ENCODE measurements at regions of chr2 and their contacts with region 1.

Region 1: DNA sequence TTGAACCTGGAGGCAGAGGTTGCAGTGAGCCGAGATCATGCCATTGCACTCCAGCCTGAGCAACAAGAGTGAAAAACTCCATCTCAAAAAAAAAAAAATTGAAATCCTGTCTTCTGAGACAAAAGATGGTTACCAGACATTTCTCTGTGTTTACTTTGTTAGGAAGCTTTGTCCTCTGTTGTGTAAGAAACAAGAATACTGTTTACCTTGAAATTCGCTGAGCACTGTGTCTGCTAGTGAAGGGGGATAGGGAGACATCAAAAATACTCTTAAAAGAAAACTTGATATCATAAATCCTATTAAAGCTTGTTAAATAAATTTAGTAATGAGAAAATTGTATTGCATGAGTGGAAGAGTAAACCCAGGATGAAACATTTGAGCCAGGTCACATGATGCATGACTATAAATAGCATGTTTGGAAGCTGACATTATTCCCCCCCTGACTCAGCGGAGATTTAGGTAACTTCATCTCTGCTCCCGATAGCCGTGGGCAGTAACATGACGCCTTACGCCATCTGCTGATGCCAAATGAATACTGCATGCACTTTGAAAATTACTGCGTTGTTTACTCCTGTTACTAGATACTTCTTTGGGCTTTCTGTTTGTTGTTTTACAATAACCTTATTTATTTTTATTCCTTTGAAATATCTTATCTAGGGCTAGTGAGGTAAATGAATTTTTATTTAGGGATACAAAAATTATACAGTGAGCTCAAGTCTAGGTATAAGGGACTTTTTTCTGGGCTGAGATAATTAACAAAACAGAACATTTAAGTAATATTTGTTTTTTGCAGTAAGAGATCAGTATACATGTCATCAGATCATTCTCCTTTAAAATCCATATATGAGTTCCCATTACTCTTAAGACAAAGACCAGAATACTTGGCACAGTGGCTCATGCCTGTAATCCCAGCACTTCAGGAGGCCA is 134.9 kb downstream of the MAP3K20 start:
- DNase-seq: peak; percentile 39 to 72
- ATAC-seq: peak; percentile 83 to 91 (median 88)
- H3K4me3 ChIP-seq: peak overlapping the region; percentile 37
- H3K27ac ChIP-seq: peak overlapping the region; percentile 86
- H3K4me1 ChIP-seq: peaks cover 64% of the 10 kb centered on the region
- H3K27me3 ChIP-seq: no peaks in the 10 kb centered on the region
- CTCF ChIP-seq: peak; percentile 85

Region 2: DNA sequence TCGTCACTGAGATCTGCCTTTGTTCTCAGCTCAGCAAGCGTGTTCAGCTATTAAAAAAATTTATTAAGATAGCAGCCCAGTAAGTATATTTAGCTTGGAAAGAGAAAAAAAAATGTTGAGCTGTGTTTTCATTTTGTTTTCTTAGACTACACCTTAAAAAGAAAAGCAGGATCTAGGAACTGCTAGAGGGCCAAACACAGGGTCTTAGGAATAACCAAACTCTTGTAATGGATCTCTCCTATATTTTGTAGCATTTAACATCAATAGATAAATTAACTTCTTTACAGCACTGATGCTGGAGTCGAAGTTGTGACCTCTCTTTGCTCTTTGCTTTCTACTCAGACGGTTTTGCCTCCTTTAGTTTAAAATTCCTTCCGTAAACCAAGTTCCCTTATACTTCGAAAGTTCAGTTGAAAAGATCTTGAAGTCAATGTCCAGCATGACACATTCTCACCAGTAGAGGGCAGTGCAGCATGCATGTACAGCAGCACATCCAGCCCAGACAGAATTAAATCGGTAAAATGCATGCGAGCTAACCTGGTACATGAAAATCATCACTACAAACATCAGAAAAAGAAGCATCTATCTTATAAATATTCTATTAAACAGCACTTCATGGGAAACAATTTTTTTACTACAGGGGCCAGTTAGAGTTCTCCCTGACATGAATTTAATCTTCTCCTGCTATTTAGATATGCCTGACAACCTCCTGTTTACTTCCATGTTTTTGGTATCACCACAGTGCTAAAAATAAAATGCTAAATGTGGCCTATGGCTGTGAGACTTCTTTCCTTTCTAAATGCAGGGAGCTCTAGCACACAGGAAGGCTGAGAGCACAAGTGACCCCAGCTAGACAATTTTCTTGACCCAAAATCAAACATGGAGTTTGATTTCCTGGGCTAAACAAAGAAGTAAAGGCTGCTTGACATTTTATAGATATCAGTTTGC is 183.1 kb before region 1 on chr2:
- intact Hi-C with region 1: loop called (anchors 2 kb)
- DNase-seq: peak; percentile 65 to 81
- ATAC-seq: peak; percentile 66 to 76 (median 71)
- H3K4me3 ChIP-seq: peak overlapping the region; percentile 27
- H3K27ac ChIP-seq: peak overlapping the region; percentile 92
- H3K4me1 ChIP-seq: peaks cover 50% of the 10 kb centered on the region
- H3K27me3 ChIP-seq: no peaks in the 10 kb centered on the region
- CTCF ChIP-seq: peak; percentile 97

Region 3: DNA sequence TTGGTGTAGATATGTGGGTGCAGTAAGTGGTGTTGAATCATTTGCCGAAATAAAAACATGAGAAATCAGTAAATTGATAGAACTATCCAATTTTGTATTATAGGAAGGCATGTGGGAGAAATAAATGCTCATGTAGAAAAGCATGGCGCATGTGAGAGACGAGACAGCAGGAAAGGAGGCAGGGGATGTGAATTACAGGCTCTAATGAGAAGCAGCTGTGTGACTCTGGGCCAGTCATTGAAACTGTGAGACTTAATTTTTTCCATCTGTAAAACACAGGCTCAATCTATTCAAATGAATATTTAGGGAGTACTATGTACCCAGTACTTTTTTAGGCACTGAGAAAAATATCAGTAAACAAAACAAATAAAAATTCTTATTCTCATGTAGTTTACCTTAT is 177.4 kb before region 1 on chr2:
- intact Hi-C with region 1: loop called in 1 of 2 experiments (anchors 2 kb)
- DNase-seq: no peak
- ATAC-seq: no peak
- H3K4me3 ChIP-seq: no peak overlapping the region
- H3K27ac ChIP-seq: peak overlapping the region; percentile 92
- H3K4me1 ChIP-seq: peaks cover 70% of the 10 kb centered on the region
- H3K27me3 ChIP-seq: no peaks in the 10 kb centered on the region
- CTCF ChIP-seq: no peak

Region 4: GRCh38 chr2:173239644-173240043 is 29.1 kb after region 1 on chr2:
- intact Hi-C with region 1: no loop called
- DNase-seq: no peak
- ATAC-seq: no peak
- H3K4me3 ChIP-seq: no peak overlapping the region
- H3K27ac ChIP-seq: no peak overlapping the region
- H3K4me1 ChIP-seq: no peaks in the 10 kb centered on the region
- H3K27me3 ChIP-seq: no peaks in the 10 kb centered on the region
- CTCF ChIP-seq: no peak